ENCODE measurements at regions of chr7 and their contacts with region 1.

Region 1: GRCh38 chr7:88664630-88665233 is 94.8 kb upstream of the ZNF804B start:
- DNase-seq: peak; percentile 35
- H3K4me3 ChIP-seq: no peak overlapping the region
- H3K27ac ChIP-seq: no peak overlapping the region
- H3K4me1 ChIP-seq: peaks cover 7% of the 10 kb centered on the region
- H3K27me3 ChIP-seq: no peaks in the 10 kb centered on the region
- CTCF ChIP-seq: no peak

Region 2: GRCh38 chr7:88566173-88566729 is 98.5 kb before region 1 on chr7:
- CTCF ChIA-PET with region 1: no interaction called
- dilution Hi-C with region 1: loop called (anchors 5 kb)
- in situ Hi-C with region 1: no loop called
- intact Hi-C with region 1: no loop called
- DNase-seq: no peak
- H3K4me3 ChIP-seq: no peak overlapping the region
- H3K27ac ChIP-seq: no peak overlapping the region
- H3K4me1 ChIP-seq: no peaks in the 10 kb centered on the region
- H3K27me3 ChIP-seq: peaks cover 4% of the 10 kb centered on the region
- CTCF ChIP-seq: no peak

Region 3: GRCh38 chr7:88725754-88726153 is 61.0 kb after region 1 on chr7:
- CTCF ChIA-PET with region 1: no interaction called
- dilution Hi-C with region 1: no loop called
- in situ Hi-C with region 1: no loop called
- intact Hi-C with region 1: no loop called
- DNase-seq: no peak
- H3K4me3 ChIP-seq: no peak overlapping the region
- H3K27ac ChIP-seq: no peak overlapping the region
- H3K4me1 ChIP-seq: no peaks in the 10 kb centered on the region
- H3K27me3 ChIP-seq: no peaks in the 10 kb centered on the region
- CTCF ChIP-seq: no peak

Region 4: GRCh38 chr7:88746158-88746557 is 81.4 kb after region 1 on chr7:
- CTCF ChIA-PET with region 1: no interaction called
- dilution Hi-C with region 1: no loop called
- in situ Hi-C with region 1: no loop called
- intact Hi-C with region 1: no loop called
- DNase-seq: no peak
- H3K4me3 ChIP-seq: no peak overlapping the region
- H3K27ac ChIP-seq: no peak overlapping the region
- H3K4me1 ChIP-seq: no peaks in the 10 kb centered on the region
- H3K27me3 ChIP-seq: peaks cover 2% of the 10 kb centered on the region
- CTCF ChIP-seq: no peak